ENCODE measurements at regions of chr10 and their contacts with region 1.

Region 1: DNA sequence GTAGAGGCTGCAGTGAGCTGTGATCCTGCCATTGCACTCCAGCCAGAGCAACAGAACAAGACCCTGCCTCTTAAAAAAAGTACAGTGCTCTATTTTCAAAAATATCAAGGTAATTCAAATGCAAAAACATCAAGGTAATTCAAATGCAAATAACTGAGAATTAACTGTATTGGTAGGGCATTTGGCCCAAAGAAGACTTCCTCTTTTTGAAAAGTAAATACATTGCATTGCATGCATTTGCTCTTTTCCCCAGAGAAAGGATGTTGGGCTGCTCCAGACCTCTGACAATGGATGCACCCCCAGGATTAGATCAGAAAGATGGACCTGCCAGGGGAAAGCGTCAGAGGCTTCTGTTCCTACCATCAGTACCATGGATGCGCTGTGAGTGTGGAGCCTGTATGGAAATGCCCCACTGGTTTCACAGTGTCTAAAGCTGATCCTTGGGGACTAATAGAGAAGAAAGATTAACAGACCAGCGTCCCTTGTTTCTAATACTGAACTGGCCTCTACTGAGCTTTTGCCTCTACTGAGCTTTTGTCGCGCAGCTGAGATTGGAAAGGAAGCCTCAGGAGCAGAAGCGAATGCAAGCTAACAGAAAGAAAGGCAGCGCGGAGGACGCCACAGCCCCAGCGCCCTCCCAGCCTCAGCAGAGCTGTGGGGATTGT is 93.5 kb upstream of the LYZL2 start:
- DNase-seq: no peak
- H3K4me3 ChIP-seq: no peak overlapping the region
- H3K27ac ChIP-seq: no peak overlapping the region
- H3K4me1 ChIP-seq: no peaks in the 10 kb centered on the region
- H3K27me3 ChIP-seq: no peaks in the 10 kb centered on the region
- CTCF ChIP-seq: no peak
- POLR2A ChIP-seq: no peak

Region 2: GRCh38 chr10:30873411-30873810 is 150.3 kb after region 1 on chr10:
- intact Hi-C with region 1: no loop called
- DNase-seq: no peak
- H3K4me3 ChIP-seq: no peak overlapping the region
- H3K27ac ChIP-seq: no peak overlapping the region
- H3K4me1 ChIP-seq: peaks cover 6 to 11% of the 10 kb centered on the region in 2 donors
- H3K27me3 ChIP-seq: no peaks in the 10 kb centered on the region
- CTCF ChIP-seq: no peak
- POLR2A ChIP-seq: no peak

Region 3: GRCh38 chr10:31467796-31468535 is 744.9 kb after region 1 on chr10:
- intact Hi-C with region 1: loop called (anchors 10 kb)
- DNase-seq: peak; percentile 52 to 69
- H3K4me3 ChIP-seq: no peak overlapping the region
- H3K27ac ChIP-seq: no peak overlapping the region
- H3K4me1 ChIP-seq: no peaks in the 10 kb centered on the region
- H3K27me3 ChIP-seq: no peaks in the 10 kb centered on the region
- CTCF ChIP-seq: peak; percentile 46 to 96 (median 82)
- POLR2A ChIP-seq: no peak

Region 4: DNA sequence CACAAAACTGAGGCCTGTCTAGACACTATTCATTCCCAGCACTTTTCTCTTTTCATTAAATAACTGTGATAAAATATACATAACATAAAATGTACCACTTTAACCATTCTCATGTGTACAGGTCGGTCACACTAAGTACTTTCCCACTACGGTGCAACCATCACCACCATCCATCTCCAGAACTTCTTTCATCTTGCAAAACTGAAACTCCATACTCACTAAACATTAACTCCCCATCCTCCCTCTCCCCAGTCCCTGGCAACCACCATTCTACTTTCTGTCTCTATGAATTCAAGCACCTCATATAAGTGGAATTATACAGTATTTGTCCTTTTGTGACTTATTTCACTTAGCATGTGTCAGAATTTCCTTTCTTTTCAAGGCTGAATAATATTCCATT is 1152.5 kb after region 1 on chr10:
- intact Hi-C with region 1: no loop called
- DNase-seq: no peak
- H3K4me3 ChIP-seq: no peak overlapping the region
- H3K27ac ChIP-seq: no peak overlapping the region
- H3K4me1 ChIP-seq: peaks cover 6 to 9% of the 10 kb centered on the region in 2 donors
- H3K27me3 ChIP-seq: no peaks in the 10 kb centered on the region
- CTCF ChIP-seq: no peak
- POLR2A ChIP-seq: no peak

Measured in thyroid gland (tissue), 4 donors.